PC-3 (cell line): ENCODE measurements at regions of chr11 and their contacts with region 1.

Region 1: GRCh38 chr11:37352485-37352884 is 754.4 kb upstream of the RAG2 start:
- DNase-seq: peak; percentile 27
- ATAC-seq: peak; percentile 42; the same call in 1 of the 2 replicates
- H3K4me3 ChIP-seq: no peak overlapping the region
- H3K27ac ChIP-seq: no peak overlapping the region
- H3K4me1 ChIP-seq: no peaks in the 10 kb centered on the region
- H3K27me3 ChIP-seq: no peaks in the 10 kb centered on the region
- CTCF ChIP-seq: peak; percentile 38

Region 2: GRCh38 chr11:37002831-37003230 is 349.7 kb before region 1 on chr11:
- CTCF ChIA-PET with region 1: no interaction called
- POLR2A ChIA-PET with region 1: no interaction called
- intact Hi-C with region 1: loop called (anchors 5 kb)
- DNase-seq: no peak
- ATAC-seq: no peak
- H3K4me3 ChIP-seq: no peak overlapping the region
- H3K27ac ChIP-seq: no peak overlapping the region
- H3K4me1 ChIP-seq: no peaks in the 10 kb centered on the region
- H3K27me3 ChIP-seq: no peaks in the 10 kb centered on the region
- CTCF ChIP-seq: no peak

Region 3: DNA sequence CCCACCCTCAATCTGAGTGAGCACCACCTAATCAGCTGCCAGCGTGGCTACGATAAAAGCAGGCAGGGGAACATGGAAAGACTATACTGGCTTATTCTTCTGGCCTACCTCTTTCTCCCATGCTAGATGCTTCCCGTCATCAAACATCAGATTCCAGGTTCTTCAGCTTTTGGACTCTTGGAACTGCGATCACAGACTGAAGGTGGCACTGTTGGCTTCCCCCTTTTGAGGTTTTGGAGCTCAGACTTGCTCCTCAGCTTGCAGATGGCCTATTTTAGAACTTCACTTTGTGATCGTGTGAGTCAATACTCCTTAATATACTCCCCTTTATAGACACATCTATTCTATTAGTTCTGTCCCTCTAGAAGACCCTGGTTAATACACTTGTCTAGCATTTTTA is 210.8 kb before region 1 on chr11:
- CTCF ChIA-PET with region 1: no interaction called
- POLR2A ChIA-PET with region 1: no interaction called
- intact Hi-C with region 1: loop called (anchors 2 kb)
- DNase-seq: peak; percentile 53
- ATAC-seq: peak; percentile 46
- H3K4me3 ChIP-seq: no peak overlapping the region
- H3K27ac ChIP-seq: no peak overlapping the region
- H3K4me1 ChIP-seq: no peaks in the 10 kb centered on the region
- H3K27me3 ChIP-seq: no peaks in the 10 kb centered on the region
- CTCF ChIP-seq: peak; percentile 55; the same call in 1 of the 2 replicates

Region 4: DNA sequence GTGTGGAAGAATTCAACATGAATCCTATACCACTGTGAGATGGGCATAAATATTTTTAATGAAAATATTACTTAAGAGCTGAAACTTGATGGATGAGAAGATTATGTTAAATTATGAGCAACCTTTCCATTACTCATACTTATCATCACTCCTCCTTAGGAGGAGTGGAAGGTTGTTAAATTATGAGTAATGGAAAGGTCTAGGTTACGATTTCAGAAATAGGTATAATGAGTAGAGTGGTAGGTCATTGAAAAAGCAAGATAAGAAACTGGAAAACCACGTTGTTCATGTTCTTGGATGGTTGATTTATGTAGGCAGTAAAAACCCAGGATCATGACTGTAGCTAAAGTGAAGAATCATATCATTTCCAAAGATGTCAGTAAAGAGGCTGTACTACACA is 218.8 kb after region 1 on chr11:
- CTCF ChIA-PET with region 1: no interaction called
- POLR2A ChIA-PET with region 1: no interaction called
- intact Hi-C with region 1: no loop called
- DNase-seq: peak; percentile 73
- ATAC-seq: peak; percentile 77
- H3K4me3 ChIP-seq: no peak overlapping the region
- H3K27ac ChIP-seq: peak overlapping the region; percentile 48
- H3K4me1 ChIP-seq: peaks cover 15% of the 10 kb centered on the region
- H3K27me3 ChIP-seq: no peaks in the 10 kb centered on the region
- CTCF ChIP-seq: no peak